ENCODE measurements at regions of chr9 and their contacts with region 1.

Region 1: GRCh38 chr9:88488166-88488565 is 46.8 kb upstream of the NXNL2 start:
- DNase-seq: no peak
- H3K4me3 ChIP-seq: no peak overlapping the region
- H3K27ac ChIP-seq: peak overlapping the region; percentile 15
- H3K4me1 ChIP-seq: no peaks in the 10 kb centered on the region
- H3K27me3 ChIP-seq: no peaks in the 10 kb centered on the region
- CTCF ChIP-seq: no peak

Region 2: GRCh38 chr9:88287972-88288371 is 200.2 kb before region 1 on chr9:
- CTCF ChIA-PET with region 1: no interaction called
- POLR2A ChIA-PET with region 1: no interaction called
- intact Hi-C with region 1: no loop called
- DNase-seq: no peak
- H3K4me3 ChIP-seq: no peak overlapping the region
- H3K27ac ChIP-seq: no peak overlapping the region
- H3K4me1 ChIP-seq: no peaks in the 10 kb centered on the region
- H3K27me3 ChIP-seq: no peaks in the 10 kb centered on the region
- CTCF ChIP-seq: no peak

Region 3: DNA sequence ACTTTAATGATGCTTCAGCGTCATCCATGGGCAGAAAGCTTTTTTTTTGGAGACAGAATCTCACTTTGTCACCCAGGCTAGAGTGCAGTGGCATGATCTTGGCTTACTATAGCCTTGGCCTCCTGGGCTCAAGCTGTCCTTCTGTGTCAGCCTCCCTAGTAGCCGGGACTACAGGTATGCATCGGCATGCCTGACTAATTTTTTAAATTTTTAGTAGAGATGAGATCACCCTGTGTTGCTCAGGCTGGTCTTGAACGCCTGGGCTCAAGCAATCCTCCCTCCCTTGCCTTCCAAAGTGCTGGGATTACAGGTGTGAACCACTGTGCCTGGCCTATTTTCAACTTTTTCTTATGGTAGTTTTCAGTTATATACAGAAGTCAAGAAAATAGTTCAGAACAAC is 76.7 kb before region 1 on chr9:
- CTCF ChIA-PET with region 1: no interaction called
- POLR2A ChIA-PET with region 1: interaction called, 22 read pairs
- intact Hi-C with region 1: no loop called
- DNase-seq: no peak
- H3K4me3 ChIP-seq: no peak overlapping the region
- H3K27ac ChIP-seq: no peak overlapping the region
- H3K4me1 ChIP-seq: peaks cover under 1% of the 10 kb centered on the region
- H3K27me3 ChIP-seq: no peaks in the 10 kb centered on the region
- CTCF ChIP-seq: no peak

Region 4: GRCh38 chr9:88753691-88754367 is 265.7 kb after region 1 on chr9:
- CTCF ChIA-PET with region 1: no interaction called
- POLR2A ChIA-PET with region 1: no interaction called
- intact Hi-C with region 1: no loop called
- DNase-seq: no peak
- H3K4me3 ChIP-seq: no peak overlapping the region
- H3K27ac ChIP-seq: no peak overlapping the region
- H3K4me1 ChIP-seq: peaks cover 18% of the 10 kb centered on the region
- H3K27me3 ChIP-seq: no peaks in the 10 kb centered on the region
- CTCF ChIP-seq: no peak